ENCODE measurements at regions of chr9 and their contacts with region 1.

Region 1: DNA sequence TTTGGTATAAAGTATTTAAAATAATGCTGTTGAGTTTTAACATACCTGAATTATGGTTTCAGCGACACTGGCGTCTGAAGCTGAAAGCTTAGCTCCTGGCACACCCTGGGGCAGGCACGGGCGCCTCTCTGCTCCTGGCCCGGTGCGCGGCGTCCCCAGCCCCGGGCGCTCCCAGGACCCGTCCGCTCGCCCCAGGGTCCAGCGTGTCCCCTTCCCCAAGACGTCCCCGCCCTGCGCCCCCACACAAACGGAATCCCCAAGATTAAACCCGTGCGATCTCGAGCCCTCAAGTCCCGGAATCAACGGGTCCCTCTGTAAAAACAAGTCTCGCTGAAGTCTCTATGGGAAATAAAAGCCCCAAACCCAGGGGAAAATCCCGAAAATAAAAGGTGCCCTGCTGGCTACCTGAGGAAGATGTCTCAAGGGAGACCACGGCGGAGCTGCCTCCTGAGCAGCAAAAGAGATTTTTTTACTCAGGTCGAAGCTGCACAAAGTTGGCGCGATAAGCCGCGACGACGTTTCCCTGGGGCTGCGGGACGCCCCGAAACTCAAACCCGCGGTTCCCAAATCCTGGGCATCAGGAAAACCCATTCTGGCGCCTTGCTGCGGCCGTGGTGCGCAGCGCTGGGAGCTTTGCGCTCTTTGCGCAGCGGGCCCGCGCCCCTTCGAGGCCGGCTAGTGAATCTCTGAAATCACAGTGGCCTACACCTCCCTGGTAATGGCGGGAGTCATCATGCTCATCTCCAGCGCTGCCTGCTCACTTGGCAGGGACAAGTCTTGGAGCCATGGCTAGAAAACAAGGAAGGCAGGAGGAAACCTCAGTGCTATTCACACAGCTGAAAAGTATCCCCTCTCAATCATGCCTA is 6.3 kb upstream of the IFNA8 start:
- DNase-seq: no peak
- H3K4me3 ChIP-seq: peak overlapping the region; percentile 17 to 33 (median 32)
- H3K27ac ChIP-seq: no peak overlapping the region
- H3K4me1 ChIP-seq: peaks cover 6% of the 10 kb centered on the region
- H3K27me3 ChIP-seq: peaks cover 21% of the 10 kb centered on the region
- CTCF ChIP-seq: no peak

Region 2: GRCh38 chr9:21334701-21335632 is 67.7 kb before region 1 on chr9 and contains the start of gene KLHL9:
- CTCF ChIA-PET with region 1: no interaction called
- dilution Hi-C with region 1: loop called (anchors 5 kb)
- in situ Hi-C with region 1: no loop called
- intact Hi-C with region 1: no loop called
- DNase-seq: peak; percentile 89
- H3K4me3 ChIP-seq: peak within 1 kb of the TSS; percentile 46 to 67 (median 65)
- H3K27ac ChIP-seq: peak within 1 kb of the TSS; percentile 96
- H3K4me1 ChIP-seq: peaks cover 26% of the 10 kb centered on the region
- H3K27me3 ChIP-seq: no peaks in the 10 kb centered on the region
- CTCF ChIP-seq: no peak
- total RNA-seq, gene KLHL9: 15.7 to 24.7 TPM